Prostate gland (tissue), 2 donors: ENCODE measurements at regions of chr11 and their contacts with region 1.

Region 1: GRCh38 chr11:59207988-59208451 is 4.7 kb downstream of the MPEG1 start:
- DNase-seq: peak; percentile 52
- H3K4me3 ChIP-seq: no peak overlapping the region
- H3K27ac ChIP-seq: no peak overlapping the region
- H3K4me1 ChIP-seq: no peaks in the 10 kb centered on the region
- H3K27me3 ChIP-seq: no peaks in the 10 kb centered on the region
- CTCF ChIP-seq: peak; percentile 31 to 86 (median 76)
- POLR2A ChIP-seq: no peak

Region 2: DNA sequence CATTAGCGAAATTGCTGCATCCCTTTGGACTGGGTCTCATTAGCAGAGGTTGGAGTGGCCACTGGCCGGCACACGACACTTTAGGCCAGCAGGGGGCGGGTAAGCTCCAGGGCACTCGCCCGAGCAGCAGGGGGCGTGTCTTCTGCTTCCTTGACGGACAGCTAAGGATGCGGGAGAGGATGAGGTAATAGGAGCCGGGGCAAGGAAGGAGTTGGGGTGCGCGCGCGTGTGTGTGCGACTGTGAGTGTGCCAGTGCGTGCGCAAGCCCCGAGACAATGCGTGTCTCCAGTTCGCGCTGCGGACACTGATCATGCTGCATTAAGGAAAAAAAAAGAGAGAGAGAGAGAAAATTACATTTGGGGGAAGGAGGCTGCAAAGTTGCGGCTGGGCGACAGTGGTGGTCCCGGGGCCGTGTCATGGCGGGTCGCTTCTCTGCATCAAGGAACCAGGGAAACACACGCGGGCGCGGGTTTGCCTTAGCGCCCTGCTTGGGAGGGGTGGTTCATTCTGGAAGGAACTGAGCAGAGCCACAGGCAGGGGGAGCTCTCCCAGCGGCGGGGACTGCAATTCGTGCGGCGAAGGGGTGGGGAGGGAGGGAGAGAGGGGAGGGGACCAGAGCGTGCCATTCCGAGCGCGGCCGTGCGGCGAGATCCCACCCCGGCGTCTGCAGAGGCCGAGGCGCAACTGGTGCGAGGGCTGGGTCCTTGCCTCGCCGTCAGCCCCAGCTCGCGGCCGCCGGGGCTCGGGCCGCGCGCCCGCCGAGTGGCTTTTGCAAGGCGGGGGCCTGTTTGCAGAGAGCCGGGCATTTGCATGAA is 36.3 kb before region 1 on chr11 and contains the start of gene DTX4:
- intact Hi-C with region 1: loop called (anchors 1 kb)
- DNase-seq: peak; percentile 91
- H3K4me3 ChIP-seq: peak within 1 kb of the TSS; percentile 56 to 64
- H3K27ac ChIP-seq: peak within 1 kb of the TSS; percentile 52 to 70
- H3K4me1 ChIP-seq: peaks cover 5% of the 10 kb centered on the region
- H3K27me3 ChIP-seq: no peaks in the 10 kb centered on the region
- CTCF ChIP-seq: peak; percentile 84 to 98 (median 96)
- POLR2A ChIP-seq: peak; percentile 48
- total RNA-seq, gene DTX4: 6.9 to 10.7 TPM

Region 3: GRCh38 chr11:59283825-59284772 is 76.1 kb after region 1 on chr11:
- intact Hi-C with region 1: loop called (anchors 2 kb)
- DNase-seq: peak; percentile 41
- H3K4me3 ChIP-seq: no peak overlapping the region
- H3K27ac ChIP-seq: no peak overlapping the region
- H3K4me1 ChIP-seq: no peaks in the 10 kb centered on the region
- H3K27me3 ChIP-seq: no peaks in the 10 kb centered on the region
- CTCF ChIP-seq: peak; percentile 48 to 87 (median 76)
- POLR2A ChIP-seq: no peak